ENCODE measurements at regions of chr12 and their contacts with region 1.

Region 1: GRCh38 chr12:102061560-102062418 is at the start of gene WASHC3:
- DNase-seq: peak; percentile 92 to 97 (median 94)
- ATAC-seq: peak; percentile 90
- H3K4me3 ChIP-seq: peak within 1 kb of the TSS; percentile 72 to 98
- H3K4me3 Mint-ChIP-seq: peak within 1 kb of the TSS; percentile 88
- H3K27ac ChIP-seq: peak within 1 kb of the TSS; percentile 90 to 97
- H3K27ac Mint-ChIP-seq: peak within 1 kb of the TSS; percentile 97
- H3K4me1 ChIP-seq: peaks cover 12% of the 10 kb centered on the region
- H3K4me1 Mint-ChIP-seq: peaks cover 46% of the 10 kb centered on the region
- H3K27me3 ChIP-seq: no peaks in the 10 kb centered on the region
- H3K27me3 Mint-ChIP-seq: no peaks in the 10 kb centered on the region
- CTCF ChIP-seq: no peak
- total RNA-seq, gene WASHC3: 19.8 to 21.6 TPM

Region 2: DNA sequence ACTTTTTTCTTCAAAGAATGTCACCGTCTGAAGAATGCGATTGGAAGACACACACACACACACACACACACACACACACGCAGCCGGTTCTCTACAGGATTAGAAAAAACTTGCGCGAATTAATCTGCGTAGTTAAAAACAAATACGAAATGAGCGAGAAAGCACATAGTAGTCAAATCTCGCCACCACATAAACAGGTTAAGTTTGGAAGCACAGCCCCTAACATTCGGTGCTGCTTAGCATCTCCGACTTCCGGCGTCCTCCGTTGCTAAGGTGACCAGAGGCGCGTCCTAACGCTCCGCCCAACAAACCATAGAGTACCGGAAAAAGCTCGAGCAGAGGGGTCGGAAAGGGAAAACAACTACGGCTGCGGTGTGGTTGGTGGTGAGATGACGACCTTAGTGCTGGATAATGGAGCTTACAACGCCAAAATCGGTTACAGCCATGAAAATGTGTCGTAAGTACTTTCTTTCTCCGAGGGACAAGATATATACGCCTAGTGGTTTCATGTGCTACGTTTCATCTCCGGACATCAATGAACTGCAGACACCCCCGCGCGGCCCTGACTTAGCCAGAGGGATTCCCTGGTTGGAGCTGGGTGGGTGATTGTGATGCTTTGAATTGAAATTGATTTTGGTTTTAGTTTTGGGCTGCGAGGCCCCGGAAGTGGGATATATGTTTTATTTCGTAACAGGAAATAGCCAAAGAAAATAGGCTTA is 1861.2 kb before region 1 on chr12 and contains the start of gene ACTR6:
- CTCF ChIA-PET with region 1: no interaction called
- POLR2A ChIA-PET with region 1: no interaction called
- intact Hi-C with region 1: loop called in 1 of 2 experiments (anchors 5 kb)
- DNase-seq: peak; percentile 96 to 99 (median 98)
- ATAC-seq: peak; percentile 82
- H3K4me3 ChIP-seq: peak within 1 kb of the TSS; percentile 57 to 75
- H3K4me3 Mint-ChIP-seq: peak within 1 kb of the TSS; percentile 97
- H3K27ac ChIP-seq: peak within 1 kb of the TSS; percentile 90 to 91
- H3K27ac Mint-ChIP-seq: peak within 1 kb of the TSS; percentile 100
- H3K4me1 ChIP-seq: peaks cover 19% of the 10 kb centered on the region
- H3K4me1 Mint-ChIP-seq: peaks cover 41% of the 10 kb centered on the region
- H3K27me3 ChIP-seq: no peaks in the 10 kb centered on the region
- H3K27me3 Mint-ChIP-seq: no peaks in the 10 kb centered on the region
- CTCF ChIP-seq: no peak
- total RNA-seq, gene ACTR6: 18.8 to 21.4 TPM

Region 3: DNA sequence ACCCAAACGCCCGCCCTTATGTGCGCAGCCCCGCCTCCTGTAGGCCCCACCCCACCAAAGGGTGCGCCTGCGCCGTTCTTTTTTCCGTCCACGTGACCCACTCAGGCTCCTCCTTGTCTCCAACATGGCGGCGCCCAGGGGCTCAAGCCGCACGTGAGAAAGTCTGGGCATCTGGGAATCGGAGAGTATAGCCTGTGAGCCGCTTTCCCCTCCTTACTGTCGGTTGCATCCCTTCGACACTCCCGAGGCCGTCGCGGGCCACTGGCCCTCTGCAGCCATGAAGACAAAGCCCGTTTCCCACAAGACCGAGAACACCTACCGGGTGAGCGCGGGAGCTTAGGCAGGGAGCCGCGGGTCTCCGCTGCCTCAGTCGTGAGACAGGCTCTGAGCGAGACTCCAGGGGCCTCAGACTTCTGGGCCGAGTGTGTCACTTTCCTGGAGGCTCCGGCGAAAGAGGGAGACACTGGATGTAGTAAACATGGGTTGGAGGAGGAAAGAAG is 781.7 kb before region 1 on chr12 and contains the start of gene UTP20:
- CTCF ChIA-PET with region 1: no interaction called
- POLR2A ChIA-PET with region 1: interaction called, 3 read pairs
- intact Hi-C with region 1: loop called (anchors 2 to 5 kb)
- DNase-seq: peak; percentile 84 to 96 (median 94)
- ATAC-seq: peak; percentile 100
- H3K4me3 ChIP-seq: peak within 1 kb of the TSS; percentile 98 to 100
- H3K4me3 Mint-ChIP-seq: peak within 1 kb of the TSS; percentile 96
- H3K27ac ChIP-seq: peak within 1 kb of the TSS; percentile 30 to 65
- H3K27ac Mint-ChIP-seq: peak within 1 kb of the TSS; percentile 80
- H3K4me1 ChIP-seq: peaks cover 11% of the 10 kb centered on the region
- H3K4me1 Mint-ChIP-seq: peaks cover 26% of the 10 kb centered on the region
- H3K27me3 ChIP-seq: peaks cover 0 to 4% of the 10 kb centered on the region in 2 experiments
- H3K27me3 Mint-ChIP-seq: peaks cover 6% of the 10 kb centered on the region
- CTCF ChIP-seq: no peak
- total RNA-seq, gene UTP20: 11.2 to 12.9 TPM

Region 4: GRCh38 chr12:101430456-101430855 is 631.3 kb before region 1 on chr12:
- CTCF ChIA-PET with region 1: no interaction called
- POLR2A ChIA-PET with region 1: no interaction called
- intact Hi-C with region 1: no loop called
- DNase-seq: no peak
- ATAC-seq: no peak
- H3K4me3 ChIP-seq: no peak overlapping the region
- H3K4me3 Mint-ChIP-seq: no peak overlapping the region
- H3K27ac ChIP-seq: no peak overlapping the region
- H3K27ac Mint-ChIP-seq: no peak overlapping the region
- H3K4me1 ChIP-seq: no peaks in the 10 kb centered on the region
- H3K4me1 Mint-ChIP-seq: no peaks in the 10 kb centered on the region
- H3K27me3 ChIP-seq: no peaks in the 10 kb centered on the region
- H3K27me3 Mint-ChIP-seq: peaks cover 7% of the 10 kb centered on the region
- CTCF ChIP-seq: no peak

Region 5: GRCh38 chr12:101697197-101697929 is 364.4 kb before region 1 on chr12 and contains the start of gene CHPT1:
- CTCF ChIA-PET with region 1: no interaction called
- POLR2A ChIA-PET with region 1: interaction called, 4 read pairs
- intact Hi-C with region 1: loop called in 1 of 2 experiments (anchors 2 kb)
- DNase-seq: peak; percentile 5 to 77 (median 56)
- ATAC-seq: peak; percentile 76
- H3K4me3 ChIP-seq: peak within 1 kb of the TSS; percentile 85 to 90
- H3K4me3 Mint-ChIP-seq: peak within 1 kb of the TSS; percentile 93
- H3K27ac ChIP-seq: peak within 1 kb of the TSS; percentile 51 to 58
- H3K27ac Mint-ChIP-seq: peak within 1 kb of the TSS; percentile 81
- H3K4me1 ChIP-seq: peaks cover 18% of the 10 kb centered on the region
- H3K4me1 Mint-ChIP-seq: peaks cover 40% of the 10 kb centered on the region
- H3K27me3 ChIP-seq: no peaks in the 10 kb centered on the region
- H3K27me3 Mint-ChIP-seq: no peaks in the 10 kb centered on the region
- CTCF ChIP-seq: no peak
- total RNA-seq, gene CHPT1: 15.9 to 16.7 TPM

Region 6: GRCh38 chr12:101830367-101831325 is 231.1 kb before region 1 on chr12 and contains the start of gene GNPTAB:
- CTCF ChIA-PET with region 1: no interaction called
- POLR2A ChIA-PET with region 1: no interaction called
- intact Hi-C with region 1: loop called (anchors 2 kb)
- DNase-seq: peak; percentile 94 to 98 (median 96)
- ATAC-seq: peak; percentile 93
- H3K4me3 ChIP-seq: peak within 1 kb of the TSS; percentile 73 to 88
- H3K4me3 Mint-ChIP-seq: peak within 1 kb of the TSS; percentile 98
- H3K27ac ChIP-seq: peak within 1 kb of the TSS; percentile 68 to 75
- H3K27ac Mint-ChIP-seq: peak within 1 kb of the TSS; percentile 95
- H3K4me1 ChIP-seq: peaks cover 29% of the 10 kb centered on the region
- H3K4me1 Mint-ChIP-seq: peaks cover 40% of the 10 kb centered on the region
- H3K27me3 ChIP-seq: no peaks in the 10 kb centered on the region
- H3K27me3 Mint-ChIP-seq: no peaks in the 10 kb centered on the region
- CTCF ChIP-seq: peak; percentile 53
- total RNA-seq, gene GNPTAB: 40.4 to 46.9 TPM

Region 7: GRCh38 chr12:102043928-102044327 is 17.9 kb before region 1 on chr12:
- CTCF ChIA-PET with region 1: no interaction called
- POLR2A ChIA-PET with region 1: interaction called, 5 read pairs
- intact Hi-C with region 1: loop called in 1 of 2 experiments (anchors 2 kb)
- DNase-seq: peak in 3 of 9 experiments; percentile 28 to 56 (median 31)
- ATAC-seq: peak; percentile 62
- H3K4me3 ChIP-seq: no peak overlapping the region
- H3K4me3 Mint-ChIP-seq: peak overlapping the region; percentile 8
- H3K27ac ChIP-seq: no peak overlapping the region
- H3K27ac Mint-ChIP-seq: peak overlapping the region; percentile 82
- H3K4me1 ChIP-seq: peaks cover 18% of the 10 kb centered on the region
- H3K4me1 Mint-ChIP-seq: peaks cover 17% of the 10 kb centered on the region
- H3K27me3 ChIP-seq: no peaks in the 10 kb centered on the region
- H3K27me3 Mint-ChIP-seq: no peaks in the 10 kb centered on the region
- CTCF ChIP-seq: no peak

Region 8: DNA sequence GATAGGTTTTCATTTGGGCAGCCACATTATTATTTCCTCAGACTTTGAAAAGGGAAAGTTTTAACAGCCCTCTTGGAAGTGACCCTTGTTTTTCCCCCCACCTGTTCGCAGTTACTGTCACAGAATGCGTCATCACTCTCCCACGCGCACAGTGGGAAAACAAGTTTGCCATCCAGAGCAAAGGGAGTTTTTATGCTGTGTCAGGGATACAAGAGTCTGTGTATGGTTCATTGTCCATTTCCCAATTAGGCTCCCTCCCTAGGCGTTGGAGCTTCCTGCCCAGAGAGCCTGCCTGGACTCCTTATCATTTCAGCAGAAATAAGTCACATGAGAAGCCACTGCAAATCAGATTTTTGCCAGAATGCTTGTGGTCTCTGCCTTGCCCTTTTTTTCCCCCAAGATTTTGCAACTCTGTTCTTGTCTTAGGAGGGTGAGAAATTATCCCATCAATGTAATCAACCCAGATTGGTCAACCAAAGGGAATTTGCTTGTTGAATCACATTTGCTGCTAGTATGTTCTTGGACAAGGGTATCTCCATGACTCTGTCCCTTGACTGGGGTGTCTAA is 314.5 kb after region 1 on chr12:
- CTCF ChIA-PET with region 1: no interaction called
- POLR2A ChIA-PET with region 1: no interaction called
- intact Hi-C with region 1: no loop called
- DNase-seq: no peak
- ATAC-seq: no peak
- H3K4me3 ChIP-seq: no peak overlapping the region
- H3K4me3 Mint-ChIP-seq: no peak overlapping the region
- H3K27ac ChIP-seq: no peak overlapping the region
- H3K27ac Mint-ChIP-seq: no peak overlapping the region
- H3K4me1 ChIP-seq: no peaks in the 10 kb centered on the region
- H3K4me1 Mint-ChIP-seq: no peaks in the 10 kb centered on the region
- H3K27me3 ChIP-seq: no peaks in the 10 kb centered on the region
- H3K27me3 Mint-ChIP-seq: peaks cover 5% of the 10 kb centered on the region
- CTCF ChIP-seq: no peak

Region 9: GRCh38 chr12:102682366-102683289 is 620.8 kb after region 1 on chr12:
- CTCF ChIA-PET with region 1: no interaction called
- POLR2A ChIA-PET with region 1: no interaction called
- intact Hi-C with region 1: no loop called
- DNase-seq: no peak
- ATAC-seq: no peak
- H3K4me3 ChIP-seq: no peak overlapping the region
- H3K4me3 Mint-ChIP-seq: no peak overlapping the region
- H3K27ac ChIP-seq: no peak overlapping the region
- H3K27ac Mint-ChIP-seq: no peak overlapping the region
- H3K4me1 ChIP-seq: no peaks in the 10 kb centered on the region
- H3K4me1 Mint-ChIP-seq: no peaks in the 10 kb centered on the region
- H3K27me3 ChIP-seq: no peaks in the 10 kb centered on the region
- H3K27me3 Mint-ChIP-seq: no peaks in the 10 kb centered on the region
- CTCF ChIP-seq: no peak

Region 10: GRCh38 chr12:103930034-103930786 is 1868.4 kb after region 1 on chr12 and contains the start of gene HSP90B1:
- CTCF ChIA-PET with region 1: no interaction called
- POLR2A ChIA-PET with region 1: no interaction called
- intact Hi-C with region 1: loop called in 1 of 2 experiments (anchors 5 kb)
- DNase-seq: peak; percentile 99 to 100 (median 99)
- ATAC-seq: peak; percentile 74
- H3K4me3 ChIP-seq: peak within 1 kb of the TSS; percentile 67 to 91
- H3K4me3 Mint-ChIP-seq: peak within 1 kb of the TSS; percentile 83
- H3K27ac ChIP-seq: peak within 1 kb of the TSS; percentile 96 to 98
- H3K27ac Mint-ChIP-seq: peak within 1 kb of the TSS; percentile 97
- H3K4me1 ChIP-seq: peaks cover 43% of the 10 kb centered on the region
- H3K4me1 Mint-ChIP-seq: peaks cover 64% of the 10 kb centered on the region
- H3K27me3 ChIP-seq: no peaks in the 10 kb centered on the region
- H3K27me3 Mint-ChIP-seq: no peaks in the 10 kb centered on the region
- CTCF ChIP-seq: no peak
- total RNA-seq, gene HSP90B1: 173 to 179 TPM